ENCODE measurements at regions of chr3 and their contacts with region 1.

Region 1: DNA sequence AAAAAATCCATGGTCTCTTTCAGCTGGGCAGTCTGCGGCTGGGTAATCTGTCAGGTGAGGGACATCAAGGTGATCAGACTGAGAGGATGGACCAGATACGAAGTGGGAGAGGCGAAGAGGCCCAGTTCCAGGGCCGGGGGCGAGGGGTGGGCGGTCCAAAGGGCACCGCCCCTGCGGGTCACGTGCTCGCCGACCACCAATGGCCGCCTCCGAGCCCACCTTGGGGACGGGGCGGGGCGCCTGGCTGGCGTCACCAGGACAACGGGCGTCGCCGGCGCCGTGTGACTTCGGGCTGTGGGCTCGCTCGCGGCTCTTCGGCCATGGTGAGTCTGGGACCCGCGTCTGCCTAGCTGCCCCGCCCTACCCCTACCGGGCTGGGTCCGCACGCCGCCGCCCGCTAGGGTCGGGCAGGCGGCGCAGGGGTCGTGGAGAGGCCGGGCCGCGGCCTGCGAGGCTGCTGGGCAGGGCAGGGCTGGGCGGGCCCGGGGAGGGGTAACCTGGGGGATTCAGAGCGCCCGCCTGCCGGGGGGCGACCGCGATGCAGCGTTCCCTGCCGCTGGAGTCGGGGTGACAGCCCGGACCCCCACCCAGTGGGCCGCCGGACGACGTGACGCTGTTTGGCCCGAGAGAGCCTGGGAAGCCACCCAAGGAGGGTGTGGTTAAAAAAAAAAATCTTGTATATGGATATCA is at the start of gene FBXL2:
- DNase-seq: peak; percentile 91
- H3K4me3 ChIP-seq: peak within 1 kb of the TSS; percentile 79
- H3K27ac ChIP-seq: peak within 1 kb of the TSS; percentile 74
- H3K4me1 ChIP-seq: peaks cover 7% of the 10 kb centered on the region
- H3K27me3 ChIP-seq: no peaks in the 10 kb centered on the region
- CTCF ChIP-seq: no peak
- total RNA-seq, gene FBXL2: 7.8 and 12.0 TPM in 2 replicates

Region 2: DNA sequence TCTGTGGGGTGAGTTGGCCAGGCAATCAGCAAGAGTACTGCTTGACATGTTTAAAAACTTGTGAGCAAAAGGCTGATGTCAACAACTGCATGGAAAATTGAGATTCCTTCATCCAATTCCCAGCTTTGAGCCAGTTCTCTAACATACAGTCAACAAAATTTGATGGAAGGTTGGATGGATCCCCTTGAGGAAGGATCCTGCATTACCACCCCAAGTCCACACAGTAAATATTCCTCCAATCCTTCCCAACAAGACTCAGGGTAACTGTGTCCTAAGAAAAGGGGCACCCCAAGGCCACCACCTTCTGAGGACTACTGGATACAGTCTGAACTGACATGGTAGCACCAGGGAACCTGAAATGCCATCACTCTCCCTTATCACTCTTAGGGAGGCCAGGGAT is 195.5 kb before region 1 on chr3:
- CTCF ChIA-PET with region 1: no interaction called
- POLR2A ChIA-PET with region 1: no interaction called
- intact Hi-C with region 1: no loop called
- DNase-seq: no peak
- H3K4me3 ChIP-seq: no peak overlapping the region
- H3K27ac ChIP-seq: no peak overlapping the region
- H3K4me1 ChIP-seq: peaks cover 7% of the 10 kb centered on the region
- H3K27me3 ChIP-seq: no peaks in the 10 kb centered on the region
- CTCF ChIP-seq: no peak

Region 3: DNA sequence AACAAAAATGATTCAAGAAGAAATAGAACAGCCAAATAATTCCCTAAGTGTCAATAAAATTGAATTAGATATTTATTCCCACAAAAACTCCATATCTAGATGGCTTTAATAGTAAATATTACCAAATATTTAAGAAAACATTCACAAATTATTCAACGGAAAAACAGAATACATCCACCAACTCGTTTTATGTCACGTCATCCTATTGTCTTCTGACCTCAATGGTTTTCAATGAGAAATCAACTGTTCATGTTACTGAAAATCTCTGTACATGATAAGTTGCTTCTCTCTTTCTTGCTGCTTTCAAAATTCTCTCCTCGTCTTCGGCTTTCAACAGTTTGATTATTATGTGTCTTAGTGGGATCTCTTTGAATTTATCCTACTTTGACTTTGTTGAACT is 17.2 kb before region 1 on chr3:
- CTCF ChIA-PET with region 1: no interaction called
- POLR2A ChIA-PET with region 1: no interaction called
- intact Hi-C with region 1: loop called (anchors 1 kb)
- DNase-seq: no peak
- H3K4me3 ChIP-seq: no peak overlapping the region
- H3K27ac ChIP-seq: no peak overlapping the region
- H3K4me1 ChIP-seq: no peaks in the 10 kb centered on the region
- H3K27me3 ChIP-seq: no peaks in the 10 kb centered on the region
- CTCF ChIP-seq: no peak